ENCODE measurements at regions of chr7 and their contacts with region 1.

Region 1: GRCh38 chr7:127413962-127414361 is 21.5 kb upstream of the ZNF800 start:
- DNase-seq: no peak
- ATAC-seq: no peak
- H3K4me3 ChIP-seq: no peak overlapping the region
- H3K27ac ChIP-seq: peak overlapping the region in 1 of 12 donors; percentile 57
- H3K4me1 ChIP-seq: peaks cover 0 to 18% (median 0%) of the 10 kb centered on the region in 12 donors
- H3K27me3 ChIP-seq: peaks cover 0 to 12% (median 0%) of the 10 kb centered on the region in 9 donors
- CTCF ChIP-seq: no peak
- POLR2A ChIP-seq: no peak

Region 2: DNA sequence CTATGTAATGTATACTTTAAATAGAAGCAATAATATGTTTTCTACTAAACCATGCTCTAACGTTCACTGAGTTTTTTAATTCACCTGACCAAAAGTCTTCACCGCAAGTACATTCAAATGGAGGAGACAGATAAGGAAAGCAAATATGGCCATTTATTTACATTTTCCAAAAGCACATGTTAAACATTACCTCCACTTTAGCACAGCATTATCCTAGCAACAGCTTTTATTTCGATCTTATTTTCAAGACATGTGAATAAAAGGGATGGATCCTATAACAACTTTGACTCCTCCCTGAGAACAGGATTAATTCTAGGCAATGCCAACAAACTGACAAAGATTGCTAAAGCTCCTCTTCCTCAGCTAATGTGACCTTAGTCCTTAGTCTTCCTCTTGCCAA is 149.7 kb before region 1 on chr7:
- intact Hi-C with region 1: loop called in 1 of 10 experiments (anchors 10 kb)
- DNase-seq: no peak
- ATAC-seq: no peak
- H3K4me3 ChIP-seq: no peak overlapping the region
- H3K27ac ChIP-seq: no peak overlapping the region
- H3K4me1 ChIP-seq: no peaks in the 10 kb centered on the region
- H3K27me3 ChIP-seq: peaks cover 0 to 23% (median 0%) of the 10 kb centered on the region in 9 donors
- CTCF ChIP-seq: no peak
- POLR2A ChIP-seq: no peak

Region 3: GRCh38 chr7:127588019-127588696 is 174.2 kb after region 1 on chr7 and contains the start of gene ARF5:
- intact Hi-C with region 1: no loop called
- DNase-seq: peak; percentile 89 to 94 (median 92)
- ATAC-seq: peak; percentile 82 to 95 (median 92)
- H3K4me3 ChIP-seq: peak within 1 kb of the TSS; percentile 83 to 100 (median 96)
- H3K27ac ChIP-seq: peak within 1 kb of the TSS; percentile 51 to 95 (median 92)
- H3K4me1 ChIP-seq: peaks cover 10 to 49% (median 34%) of the 10 kb centered on the region in 12 donors
- H3K27me3 ChIP-seq: no peaks in the 10 kb centered on the region
- CTCF ChIP-seq: no peak
- POLR2A ChIP-seq: peak; percentile 69 to 78
- total RNA-seq, gene ARF5: 85.3 to 196 (median 96.3) TPM

Measured in heart left ventricle (tissue), 16 donors.